Heart right ventricle (tissue), 16 donors: ENCODE measurements at regions of chr18 and their contacts with region 1.

Region 1: GRCh38 chr18:55982992-55983391 is 395.0 kb upstream of the TCF4 start:
- DNase-seq: peak in 1 of 2 donors; percentile 6
- ATAC-seq: peak in 7 of 8 donors; percentile 32 to 72 (median 54)
- H3K4me3 ChIP-seq: peak overlapping the region in 2 of 10 donors; percentile 3 to 6
- H3K27ac ChIP-seq: peak overlapping the region; percentile 15 to 83 (median 68)
- H3K4me1 ChIP-seq: peaks cover 0 to 18% (median 9%) of the 10 kb centered on the region in 9 donors
- H3K27me3 ChIP-seq: no peaks in the 10 kb centered on the region
- CTCF ChIP-seq: no peak

Region 2: DNA sequence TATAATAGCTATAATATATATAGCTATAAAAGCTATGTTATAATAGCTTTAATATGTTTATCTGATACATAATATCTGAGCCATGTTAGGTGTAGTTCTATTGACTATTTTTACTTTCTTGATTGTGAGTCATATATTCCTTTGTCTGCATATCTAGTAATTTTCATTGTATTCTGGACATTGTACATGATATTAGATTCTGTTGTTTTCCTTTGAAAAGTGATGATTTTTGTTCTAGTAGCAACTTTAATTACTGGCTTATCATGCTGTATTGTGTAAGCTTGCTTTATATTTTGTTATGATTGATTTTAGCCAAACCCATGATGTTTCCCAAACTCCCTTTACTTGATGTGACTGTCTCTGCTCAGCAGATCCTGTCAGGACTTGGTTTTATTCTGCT is 269.3 kb before region 1 on chr18:
- intact Hi-C with region 1: no loop called
- DNase-seq: no peak
- ATAC-seq: no peak
- H3K4me3 ChIP-seq: no peak overlapping the region
- H3K27ac ChIP-seq: no peak overlapping the region
- H3K4me1 ChIP-seq: no peaks in the 10 kb centered on the region
- H3K27me3 ChIP-seq: no peaks in the 10 kb centered on the region
- CTCF ChIP-seq: no peak

Region 3: DNA sequence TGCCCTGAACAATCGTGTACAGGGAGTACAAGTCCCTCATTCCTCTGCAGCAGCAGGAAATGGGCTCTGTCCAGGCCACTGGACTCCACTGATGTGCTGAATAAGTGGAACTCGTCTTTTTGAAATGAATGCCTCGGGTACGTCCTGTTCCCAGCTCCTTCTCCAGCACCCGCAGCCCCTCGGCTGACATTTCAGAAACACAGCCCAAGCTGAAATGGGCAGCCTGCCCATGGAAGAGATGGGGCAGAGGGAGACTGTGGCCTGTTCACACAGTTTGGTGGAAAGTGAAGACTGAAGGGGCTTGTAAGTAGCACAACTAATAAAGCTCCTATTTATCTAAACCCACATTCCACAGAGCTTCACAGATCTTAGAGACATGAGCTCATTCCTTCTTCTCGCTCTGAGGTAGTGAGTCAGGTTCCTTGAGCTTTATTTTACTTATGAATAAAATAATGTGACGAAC is 156.8 kb after region 1 on chr18:
- intact Hi-C with region 1: no loop called
- DNase-seq: peak in 1 of 2 donors; percentile 24
- ATAC-seq: peak in 7 of 8 donors; percentile 48 to 97 (median 71)
- H3K4me3 ChIP-seq: no peak overlapping the region
- H3K27ac ChIP-seq: peak overlapping the region in 8 of 10 donors; percentile 21 to 65 (median 49)
- H3K4me1 ChIP-seq: peaks cover 0 to 11% (median 0%) of the 10 kb centered on the region in 9 donors
- H3K27me3 ChIP-seq: no peaks in the 10 kb centered on the region
- CTCF ChIP-seq: no peak

Region 4: GRCh38 chr18:56248610-56249235 is 265.7 kb after region 1 on chr18:
- intact Hi-C with region 1: loop called in 1 of 10 experiments (anchors 5 kb)
- DNase-seq: no peak
- ATAC-seq: no peak
- H3K4me3 ChIP-seq: no peak overlapping the region
- H3K27ac ChIP-seq: no peak overlapping the region
- H3K4me1 ChIP-seq: peaks cover 0 to 25% (median 10%) of the 10 kb centered on the region in 9 donors
- H3K27me3 ChIP-seq: no peaks in the 10 kb centered on the region
- CTCF ChIP-seq: no peak